Lower leg skin (tissue), 4 donors: ENCODE measurements at regions of chr2 and their contacts with region 1.

Region 1: GRCh38 chr2:165497659-165498317 is 28.3 kb downstream of the CSRNP3 start:
- DNase-seq: no peak
- H3K4me3 ChIP-seq: no peak overlapping the region
- CTCF ChIP-seq: no peak
- POLR2A ChIP-seq: no peak

Region 2: DNA sequence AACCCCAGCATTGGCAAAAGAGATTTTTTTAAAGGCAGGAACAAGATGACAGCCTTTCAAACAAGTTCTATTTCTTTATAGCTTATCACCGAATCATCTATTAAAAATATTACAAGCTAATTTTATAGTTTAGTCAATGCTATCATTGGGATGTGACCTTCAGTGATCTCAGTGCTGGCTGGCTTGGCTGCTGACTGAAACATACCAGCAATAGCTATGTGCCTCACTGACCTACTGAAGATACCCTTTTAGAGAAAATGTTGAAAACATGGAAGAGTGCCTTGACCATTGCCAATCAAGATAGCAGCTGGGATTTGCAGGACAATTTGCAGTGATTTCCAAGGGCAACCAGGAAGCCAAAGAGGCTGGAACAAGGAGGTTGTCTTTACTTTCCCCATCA is 15.7 kb after region 1 on chr2:
- intact Hi-C with region 1: loop called (anchors 2 kb)
- DNase-seq: no peak
- H3K4me3 ChIP-seq: no peak overlapping the region
- CTCF ChIP-seq: no peak
- POLR2A ChIP-seq: no peak

Region 3: GRCh38 chr2:165794536-165794928 is 296.7 kb after region 1 on chr2:
- intact Hi-C with region 1: no loop called
- DNase-seq: peak; percentile 29 to 85
- H3K4me3 ChIP-seq: peak overlapping the region; percentile 53
- CTCF ChIP-seq: no peak
- POLR2A ChIP-seq: no peak

Region 4: DNA sequence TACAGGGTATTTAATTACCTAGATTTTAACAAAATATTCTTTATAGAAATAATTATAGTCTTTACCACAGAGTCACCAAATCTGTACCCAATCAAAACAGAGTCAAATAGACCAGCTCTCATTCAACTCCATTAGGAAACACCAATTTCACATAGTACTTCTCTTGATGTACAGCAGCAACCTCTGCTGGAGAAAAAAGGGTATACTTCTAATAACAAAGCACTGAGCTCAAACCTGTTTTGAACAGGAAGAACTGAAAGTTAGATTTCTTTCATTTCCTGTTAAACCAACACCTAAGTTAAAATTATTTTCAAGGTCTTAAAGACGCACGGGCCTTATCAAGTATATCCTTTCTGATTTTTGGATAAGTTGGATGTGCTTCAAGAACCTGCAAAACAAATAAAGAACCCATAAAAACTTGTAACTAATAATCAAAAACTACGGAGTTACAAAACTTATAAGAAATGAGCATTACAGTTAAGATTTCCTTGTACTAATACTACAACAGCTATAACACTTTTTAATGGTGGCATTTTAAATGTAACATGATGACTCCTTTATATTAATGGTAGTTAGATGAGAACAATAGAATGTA is 376.8 kb after region 1 on chr2:
- intact Hi-C with region 1: no loop called
- DNase-seq: no peak
- H3K4me3 ChIP-seq: no peak overlapping the region
- CTCF ChIP-seq: no peak
- POLR2A ChIP-seq: no peak